Activated CD4-positive, alpha-beta memory T cell treated with anti-CD3 and anti-CD28 coated beads, Interleukin-2, amount 10 ng/mL, durations not matched to agents 7 days and 5 days (primary cell): ENCODE measurements at regions of chr10 and their contacts with region 1.

Region 1: DNA sequence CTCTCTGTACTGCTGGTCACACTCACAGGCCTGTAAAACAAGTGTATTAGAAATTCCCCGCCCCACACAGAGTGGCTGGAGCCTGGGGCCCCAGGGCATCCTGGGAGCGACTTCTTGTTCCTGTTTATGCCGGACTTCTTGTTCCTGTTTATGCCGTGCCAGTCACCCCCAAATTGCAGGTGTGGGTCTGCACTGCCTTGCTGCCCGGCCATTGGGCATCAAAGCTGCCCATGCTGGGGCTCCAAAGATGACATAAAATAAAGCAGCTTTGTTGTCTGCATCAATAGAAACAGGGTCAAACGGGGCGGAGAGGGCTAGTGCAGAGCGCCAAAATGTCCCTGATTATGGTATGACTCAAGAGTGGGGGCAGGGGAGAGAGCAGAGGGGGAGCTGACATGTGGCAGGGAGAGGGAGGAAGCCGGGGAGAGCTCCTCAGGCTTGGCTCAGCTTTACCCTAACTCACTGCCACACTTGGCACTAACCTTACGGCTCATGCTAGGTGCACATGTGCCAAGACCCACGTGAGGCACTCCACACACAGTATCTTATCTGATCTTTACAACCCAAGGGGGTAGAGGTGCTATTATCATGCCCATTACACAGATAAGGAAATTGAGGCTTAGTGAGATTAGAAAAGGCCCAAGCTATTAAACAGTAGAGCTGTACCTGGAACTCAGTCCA is 98.4 kb downstream of the PIP4K2A start:
- DNase-seq: peak; percentile 43
- H3K4me3 Mint-ChIP-seq: peak overlapping the region; percentile 72
- H3K27ac Mint-ChIP-seq: peak overlapping the region; percentile 84
- H3K4me1 Mint-ChIP-seq: peaks cover 94% of the 10 kb centered on the region
- H3K27me3 Mint-ChIP-seq: no peaks in the 10 kb centered on the region

Region 2: GRCh38 chr10:22573820-22574569 is 42.0 kb before region 1 on chr10:
- CTCF ChIA-PET with region 1: interaction called, 11 read pairs
- POLR2A ChIA-PET with region 1: interaction called, 3 read pairs
- DNase-seq: peak; percentile 38
- H3K4me3 Mint-ChIP-seq: no peak overlapping the region
- H3K27ac Mint-ChIP-seq: peak overlapping the region; percentile 64
- H3K4me1 Mint-ChIP-seq: peaks cover 46% of the 10 kb centered on the region
- H3K27me3 Mint-ChIP-seq: no peaks in the 10 kb centered on the region

Region 3: DNA sequence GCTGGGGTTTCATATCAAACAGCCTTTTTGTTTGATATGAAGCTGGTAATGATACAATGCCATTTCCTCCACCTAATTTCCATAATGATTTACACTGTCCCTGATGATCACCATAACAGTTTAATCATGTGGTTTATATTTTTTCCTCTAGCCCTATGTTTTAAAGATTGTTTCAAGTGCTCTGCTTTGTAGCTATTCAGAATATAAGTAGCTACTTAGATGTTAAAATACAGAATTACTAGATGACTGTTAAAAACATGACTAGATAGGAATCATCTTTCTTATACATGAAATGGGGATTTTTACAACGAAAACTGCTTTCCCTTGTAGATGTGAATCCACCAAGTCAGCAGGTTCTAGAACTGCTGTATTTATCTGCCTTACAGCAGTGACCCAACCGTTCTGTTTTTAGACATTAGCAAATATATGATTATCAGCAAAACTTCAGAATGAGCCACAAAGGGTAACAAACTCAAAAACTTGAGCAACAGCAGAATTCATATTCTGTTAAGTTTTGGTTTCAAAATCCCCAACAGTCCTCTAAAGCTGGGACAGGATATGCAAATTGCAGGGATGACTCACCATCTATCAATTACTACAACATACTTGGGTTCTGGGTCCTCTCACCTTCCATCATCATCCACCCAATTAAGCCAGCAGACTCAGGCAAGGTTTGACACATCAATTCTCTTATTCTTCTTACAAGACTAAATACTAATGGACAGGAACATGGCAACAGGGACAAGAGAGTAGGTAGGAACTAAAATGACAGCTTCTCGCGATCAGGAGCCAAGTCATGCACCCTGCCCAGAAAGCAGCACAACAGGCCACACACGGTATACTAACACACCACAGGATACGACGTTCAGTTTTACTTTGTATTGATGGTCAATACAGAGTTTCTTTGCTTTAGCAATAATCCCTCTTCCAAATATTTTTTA is 14.5 kb after region 1 on chr10:
- CTCF ChIA-PET with region 1: interaction called, 28 read pairs
- POLR2A ChIA-PET with region 1: interaction called, 198 read pairs
- DNase-seq: peak; percentile 56
- H3K4me3 Mint-ChIP-seq: peak overlapping the region; percentile 74
- H3K27ac Mint-ChIP-seq: peak overlapping the region; percentile 97
- H3K4me1 Mint-ChIP-seq: peaks cover 95% of the 10 kb centered on the region
- H3K27me3 Mint-ChIP-seq: no peaks in the 10 kb centered on the region

Region 4: GRCh38 chr10:22655311-22655981 is 39.5 kb after region 1 on chr10:
- CTCF ChIA-PET with region 1: interaction called, 3 read pairs
- POLR2A ChIA-PET with region 1: interaction called, 19 read pairs
- DNase-seq: no peak
- H3K4me3 Mint-ChIP-seq: peak overlapping the region; percentile 36
- H3K27ac Mint-ChIP-seq: peak overlapping the region; percentile 85
- H3K4me1 Mint-ChIP-seq: peaks cover 94% of the 10 kb centered on the region
- H3K27me3 Mint-ChIP-seq: no peaks in the 10 kb centered on the region